Naive thymus-derived CD4-positive, alpha-beta T cell (primary cell): ENCODE measurements at regions of chr3 and their contacts with region 1.

Region 1: DNA sequence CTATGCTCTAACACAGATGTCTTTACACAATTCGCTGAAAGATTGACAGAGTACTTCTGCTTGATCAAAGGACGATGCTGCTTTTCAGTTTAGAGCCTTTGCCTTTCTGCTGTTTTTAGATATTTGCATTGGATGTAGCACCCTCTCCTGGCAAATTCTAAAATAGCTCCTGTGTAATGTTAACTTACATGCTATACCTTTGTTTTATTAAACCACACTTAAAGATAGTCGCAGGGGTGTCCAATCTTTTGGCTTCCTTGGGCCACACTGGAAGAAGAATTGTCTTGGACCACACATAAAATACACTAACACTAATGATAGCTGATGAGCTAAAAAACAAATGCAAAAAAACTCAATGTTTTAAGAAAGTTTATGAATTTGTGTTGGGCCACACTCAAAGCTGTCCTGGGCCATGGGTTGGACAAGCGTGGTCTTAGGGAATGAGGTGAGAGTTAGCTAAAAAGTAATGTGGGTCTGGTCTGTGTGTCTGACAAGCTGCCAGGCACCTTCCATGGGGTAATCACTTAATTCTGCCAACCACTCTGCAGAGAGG is 62.9 kb downstream of the ATG7 start:
- DNase-seq: peak in 7 of 9 donors; percentile 35 to 66 (median 56)
- ATAC-seq: peak; percentile 86
- H3K4me3 ChIP-seq: no peak overlapping the region
- H3K4me3 Mint-ChIP-seq: no peak overlapping the region
- H3K27ac ChIP-seq: no peak overlapping the region
- H3K27ac Mint-ChIP-seq: no peak overlapping the region
- H3K4me1 ChIP-seq: no peaks in the 10 kb centered on the region
- H3K4me1 Mint-ChIP-seq: peaks cover 0 to 7% (median 0%) of the 10 kb centered on the region in 7 donors
- H3K27me3 ChIP-seq: no peaks in the 10 kb centered on the region
- H3K27me3 Mint-ChIP-seq: no peaks in the 10 kb centered on the region

Region 2: DNA sequence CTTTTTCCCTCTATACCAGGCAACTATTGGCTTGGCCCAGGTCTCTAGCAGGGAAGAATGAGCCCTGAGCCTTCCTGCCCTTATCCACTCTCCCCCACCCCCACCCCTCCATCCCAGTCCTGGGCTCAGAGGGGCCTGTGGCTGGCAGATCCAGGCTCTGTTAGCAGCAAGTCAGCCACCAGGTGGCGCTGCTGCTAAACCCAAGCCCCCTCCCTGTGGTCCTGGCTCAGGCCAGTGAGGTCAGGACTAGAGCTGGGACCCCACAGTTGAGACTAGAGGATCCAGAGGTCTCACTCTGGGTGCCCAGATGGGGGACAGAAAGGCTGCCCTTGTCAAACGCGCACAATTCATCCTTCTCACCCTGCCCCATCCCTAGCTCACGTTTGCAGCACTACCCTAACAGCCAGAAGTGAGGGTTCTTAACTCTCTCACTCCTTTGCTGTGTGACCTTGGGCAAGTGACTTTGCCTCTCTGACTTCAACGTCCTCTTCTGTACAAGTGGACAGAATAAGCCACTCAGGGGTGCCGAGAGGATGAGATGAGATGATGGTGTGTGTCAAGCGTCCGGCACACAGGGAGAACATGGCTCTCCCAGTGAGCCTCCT is 389.3 kb before region 1 on chr3:
- CTCF ChIA-PET with region 1: no interaction called
- POLR2A ChIA-PET with region 1: no interaction called
- intact Hi-C with region 1: loop called (anchors 5 to 10 kb)
- DNase-seq: peak in 6 of 9 donors; percentile 11 to 57 (median 20)
- ATAC-seq: peak; percentile 69
- H3K4me3 ChIP-seq: no peak overlapping the region
- H3K4me3 Mint-ChIP-seq: no peak overlapping the region
- H3K27ac ChIP-seq: no peak overlapping the region
- H3K27ac Mint-ChIP-seq: no peak overlapping the region
- H3K4me1 ChIP-seq: no peaks in the 10 kb centered on the region
- H3K4me1 Mint-ChIP-seq: no peaks in the 10 kb centered on the region
- H3K27me3 ChIP-seq: no peaks in the 10 kb centered on the region
- H3K27me3 Mint-ChIP-seq: peaks cover 3 to 27% (median 17%) of the 10 kb centered on the region in 5 donors

Region 3: GRCh38 chr3:11060500-11061251 is 274.5 kb before region 1 on chr3:
- CTCF ChIA-PET with region 1: interaction called, 5 read pairs
- POLR2A ChIA-PET with region 1: no interaction called
- intact Hi-C with region 1: loop called (anchors 1 to 5 kb)
- DNase-seq: peak in 6 of 9 donors; percentile 11 to 55 (median 26)
- ATAC-seq: peak; percentile 63
- H3K4me3 ChIP-seq: no peak overlapping the region
- H3K4me3 Mint-ChIP-seq: peak overlapping the region in 1 of 10 donors; percentile 18
- H3K27ac ChIP-seq: no peak overlapping the region
- H3K27ac Mint-ChIP-seq: no peak overlapping the region
- H3K4me1 ChIP-seq: no peaks in the 10 kb centered on the region
- H3K4me1 Mint-ChIP-seq: peaks cover 0 to 5% (median 0%) of the 10 kb centered on the region in 7 donors
- H3K27me3 ChIP-seq: no peaks in the 10 kb centered on the region
- H3K27me3 Mint-ChIP-seq: peaks cover 2 to 26% (median 20%) of the 10 kb centered on the region in 5 donors

Region 4: DNA sequence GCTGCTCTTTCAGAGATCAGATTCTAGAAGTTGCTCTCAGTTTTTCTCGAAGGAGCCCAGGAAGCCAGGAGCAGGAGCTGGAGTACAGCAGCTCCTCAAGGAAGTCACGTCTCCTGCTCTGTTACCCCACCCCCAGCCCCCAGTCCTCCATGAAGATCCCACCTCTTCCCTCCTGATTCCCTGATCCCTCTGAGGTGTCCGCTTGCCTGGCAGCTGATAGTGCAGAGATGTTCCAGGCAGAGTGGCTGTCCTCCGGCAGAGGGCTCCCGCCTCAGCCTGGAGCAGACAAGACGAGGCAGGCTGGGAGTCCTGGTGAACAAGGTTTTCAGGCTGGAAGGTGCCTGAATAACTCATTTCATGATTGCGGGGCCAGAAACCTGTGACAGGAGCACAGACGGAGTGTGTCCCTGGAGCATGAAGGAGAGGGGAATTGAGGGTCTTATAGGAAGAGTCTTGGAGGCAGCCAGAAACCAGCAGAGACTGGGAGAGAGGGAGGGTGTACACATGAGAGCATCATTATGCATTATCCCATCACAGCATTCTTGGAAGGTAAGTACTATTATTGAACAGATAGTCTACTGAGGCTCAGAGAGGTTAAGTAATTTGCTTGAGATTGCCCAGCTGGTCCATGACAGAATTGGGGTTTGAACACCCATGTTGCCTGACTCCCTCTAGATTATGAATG is 179.6 kb before region 1 on chr3:
- CTCF ChIA-PET with region 1: no interaction called
- POLR2A ChIA-PET with region 1: no interaction called
- intact Hi-C with region 1: loop called in 1 of 2 experiments (anchors 1 kb)
- DNase-seq: no peak
- ATAC-seq: no peak
- H3K4me3 ChIP-seq: no peak overlapping the region
- H3K4me3 Mint-ChIP-seq: peak overlapping the region in 3 of 10 donors; percentile 1 to 57 (median 42)
- H3K27ac ChIP-seq: no peak overlapping the region
- H3K27ac Mint-ChIP-seq: no peak overlapping the region
- H3K4me1 ChIP-seq: no peaks in the 10 kb centered on the region
- H3K4me1 Mint-ChIP-seq: peaks cover 0 to 18% (median 7%) of the 10 kb centered on the region in 7 donors
- H3K27me3 ChIP-seq: no peaks in the 10 kb centered on the region
- H3K27me3 Mint-ChIP-seq: peaks cover 46 to 89% (median 63%) of the 10 kb centered on the region in 5 donors